ENCODE measurements at regions of chr1 and their contacts with region 1.

Region 1: GRCh38 chr1:151639466-151639865 is 27.6 kb downstream of the SNX27 start:
- DNase-seq: no peak
- ATAC-seq: no peak
- H3K4me3 ChIP-seq: no peak overlapping the region
- H3K4me3 Mint-ChIP-seq: no peak overlapping the region
- H3K27ac ChIP-seq: no peak overlapping the region
- H3K27ac Mint-ChIP-seq: no peak overlapping the region
- H3K4me1 ChIP-seq: no peaks in the 10 kb centered on the region
- H3K4me1 Mint-ChIP-seq: peaks cover 4% of the 10 kb centered on the region
- H3K27me3 ChIP-seq: no peaks in the 10 kb centered on the region
- H3K27me3 Mint-ChIP-seq: no peaks in the 10 kb centered on the region
- CTCF ChIP-seq: no peak

Region 2: DNA sequence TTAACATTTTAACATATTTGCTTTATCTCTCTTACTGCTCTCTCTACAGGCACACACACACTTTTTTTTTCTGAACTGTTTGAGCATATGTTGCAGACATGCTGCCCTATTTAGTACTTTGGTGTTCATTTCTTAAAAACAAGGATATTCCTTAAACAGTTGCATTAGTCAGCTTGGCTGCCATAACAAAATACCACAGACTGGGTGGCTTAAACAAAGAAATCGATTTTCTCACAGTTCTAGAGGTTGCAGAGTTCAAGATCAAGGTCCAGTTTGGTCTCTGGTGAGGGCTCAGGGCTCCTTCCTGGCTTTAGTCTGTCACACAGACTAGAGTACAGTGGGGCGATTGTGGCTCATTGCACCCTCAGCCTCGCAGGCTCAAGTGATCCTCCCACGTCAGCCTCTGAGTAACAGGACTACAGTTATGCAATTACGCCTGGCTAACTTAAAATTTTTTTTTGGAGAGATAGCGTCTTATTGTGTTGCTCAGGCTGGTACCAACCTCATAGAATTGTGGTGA is 1228.8 kb before region 1 on chr1:
- CTCF ChIA-PET with region 1: no interaction called
- POLR2A ChIA-PET with region 1: no interaction called
- intact Hi-C with region 1: loop called in 1 of 2 experiments (anchors 10 kb)
- DNase-seq: no peak
- ATAC-seq: no peak
- H3K4me3 ChIP-seq: no peak overlapping the region
- H3K4me3 Mint-ChIP-seq: no peak overlapping the region
- H3K27ac ChIP-seq: no peak overlapping the region
- H3K27ac Mint-ChIP-seq: peak overlapping the region; percentile 25
- H3K4me1 ChIP-seq: peaks cover 7% of the 10 kb centered on the region
- H3K4me1 Mint-ChIP-seq: peaks cover 75% of the 10 kb centered on the region
- H3K27me3 ChIP-seq: no peaks in the 10 kb centered on the region
- H3K27me3 Mint-ChIP-seq: no peaks in the 10 kb centered on the region
- CTCF ChIP-seq: no peak